H1 (cell line): ENCODE measurements at regions of chr17 and their contacts with region 1.

Region 1: GRCh38 chr17:10327640-10328039 is 45.2 kb downstream of the MYH13 start:
- DNase-seq: peak; percentile 73 to 97
- H3K4me3 ChIP-seq: no peak overlapping the region
- H3K27ac ChIP-seq: no peak overlapping the region
- H3K4me1 ChIP-seq: no peaks in the 10 kb centered on the region
- H3K27me3 ChIP-seq: no peaks in the 10 kb centered on the region
- CTCF ChIP-seq: peak; percentile 88 to 96 (median 96)
- EP300 ChIP-seq: no peak
- POLR2A ChIP-seq: no peak
- RAD21 ChIP-seq: peak; percentile 97 to 99

Region 2: GRCh38 chr17:10210151-10210930 is 117.3 kb before region 1 on chr17:
- CTCF ChIA-PET with region 1: no interaction called
- POLR2A ChIA-PET with region 1: no interaction called
- DNase-seq: peak; percentile 31 to 48
- H3K4me3 ChIP-seq: no peak overlapping the region
- H3K27ac ChIP-seq: no peak overlapping the region
- H3K4me1 ChIP-seq: peaks cover 5 to 16% (median 11%) of the 10 kb centered on the region in 4 experiments
- H3K27me3 ChIP-seq: no peaks in the 10 kb centered on the region
- CTCF ChIP-seq: no peak
- EP300 ChIP-seq: no peak
- POLR2A ChIP-seq: no peak
- RAD21 ChIP-seq: no peak

Region 3: GRCh38 chr17:10316801-10317542 is 10.7 kb before region 1 on chr17:
- CTCF ChIA-PET with region 1: interaction called, 28 read pairs
- POLR2A ChIA-PET with region 1: no interaction called
- DNase-seq: peak in 1 of 2 experiments; percentile 73
- H3K4me3 ChIP-seq: no peak overlapping the region
- H3K27ac ChIP-seq: no peak overlapping the region
- H3K4me1 ChIP-seq: no peaks in the 10 kb centered on the region; a peak in 1 of 7 replicates
- H3K27me3 ChIP-seq: no peaks in the 10 kb centered on the region
- CTCF ChIP-seq: peak; percentile 51 to 78 (median 74)
- EP300 ChIP-seq: no peak
- POLR2A ChIP-seq: no peak
- RAD21 ChIP-seq: peak; percentile 39 to 43

Region 4: GRCh38 chr17:10349403-10349802 is 21.8 kb after region 1 on chr17:
- CTCF ChIA-PET with region 1: interaction called, 176 read pairs
- POLR2A ChIA-PET with region 1: no interaction called
- DNase-seq: peak in 1 of 2 experiments; percentile 71
- H3K4me3 ChIP-seq: no peak overlapping the region
- H3K27ac ChIP-seq: no peak overlapping the region
- H3K4me1 ChIP-seq: no peaks in the 10 kb centered on the region
- H3K27me3 ChIP-seq: no peaks in the 10 kb centered on the region
- CTCF ChIP-seq: peak; percentile 52 to 75 (median 58)
- EP300 ChIP-seq: no peak
- POLR2A ChIP-seq: no peak
- RAD21 ChIP-seq: peak; percentile 51 to 63

Region 5: DNA sequence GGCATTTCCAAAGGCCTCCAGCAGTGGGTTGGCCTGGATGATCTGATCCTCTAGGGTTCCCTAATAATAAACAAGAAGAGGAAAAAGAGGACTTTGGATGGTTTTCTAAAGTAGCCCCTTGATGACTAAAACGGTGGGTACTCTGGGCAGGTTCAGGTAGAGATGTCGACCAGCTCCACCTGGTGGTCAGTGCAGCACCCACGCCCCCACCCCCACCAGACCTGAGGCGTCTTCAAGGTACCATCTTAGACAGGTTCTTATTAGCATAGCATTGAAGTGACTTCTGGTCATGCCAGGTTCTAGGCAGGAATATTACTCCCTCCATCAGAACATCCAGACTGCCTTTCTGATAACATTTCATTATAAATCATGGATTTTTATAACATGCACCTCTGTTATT is 30.1 kb after region 1 on chr17:
- CTCF ChIA-PET with region 1: interaction called, 176 read pairs
- POLR2A ChIA-PET with region 1: no interaction called
- DNase-seq: peak; percentile 19 to 80
- H3K4me3 ChIP-seq: no peak overlapping the region
- H3K27ac ChIP-seq: no peak overlapping the region
- H3K4me1 ChIP-seq: no peaks in the 10 kb centered on the region
- H3K27me3 ChIP-seq: no peaks in the 10 kb centered on the region
- CTCF ChIP-seq: peak; percentile 77 to 90 (median 83)
- EP300 ChIP-seq: no peak
- POLR2A ChIP-seq: no peak
- RAD21 ChIP-seq: peak; percentile 60 to 64

Region 6: DNA sequence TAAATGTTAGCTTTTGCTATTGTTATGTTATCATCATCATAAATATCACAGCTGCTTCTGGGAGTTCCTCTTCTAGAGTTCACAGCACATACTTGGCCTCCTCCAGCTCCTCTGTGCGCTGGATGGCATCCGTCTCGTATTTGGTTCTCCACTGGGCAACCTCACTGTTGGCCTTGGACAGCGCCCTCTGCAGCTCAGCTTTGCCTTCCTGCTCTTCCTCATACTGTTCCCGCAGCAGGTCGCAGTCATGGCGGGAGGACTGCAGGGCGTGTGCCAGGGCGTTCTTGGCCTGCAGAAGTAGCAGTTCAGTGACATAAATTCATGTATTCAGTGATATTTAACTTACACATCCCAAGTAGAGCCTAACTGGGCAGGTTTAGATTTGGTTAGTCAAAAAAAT is 70.7 kb after region 1 on chr17:
- CTCF ChIA-PET with region 1: interaction called, 18 read pairs
- POLR2A ChIA-PET with region 1: no interaction called
- DNase-seq: peak; percentile 9 to 67
- H3K4me3 ChIP-seq: no peak overlapping the region
- H3K27ac ChIP-seq: no peak overlapping the region
- H3K4me1 ChIP-seq: no peaks in the 10 kb centered on the region
- H3K27me3 ChIP-seq: no peaks in the 10 kb centered on the region
- CTCF ChIP-seq: peak; percentile 63 to 81 (median 75)
- EP300 ChIP-seq: no peak
- POLR2A ChIP-seq: no peak
- RAD21 ChIP-seq: peak; percentile 39 to 55; a peak in 3 of 4 replicates

Region 7: DNA sequence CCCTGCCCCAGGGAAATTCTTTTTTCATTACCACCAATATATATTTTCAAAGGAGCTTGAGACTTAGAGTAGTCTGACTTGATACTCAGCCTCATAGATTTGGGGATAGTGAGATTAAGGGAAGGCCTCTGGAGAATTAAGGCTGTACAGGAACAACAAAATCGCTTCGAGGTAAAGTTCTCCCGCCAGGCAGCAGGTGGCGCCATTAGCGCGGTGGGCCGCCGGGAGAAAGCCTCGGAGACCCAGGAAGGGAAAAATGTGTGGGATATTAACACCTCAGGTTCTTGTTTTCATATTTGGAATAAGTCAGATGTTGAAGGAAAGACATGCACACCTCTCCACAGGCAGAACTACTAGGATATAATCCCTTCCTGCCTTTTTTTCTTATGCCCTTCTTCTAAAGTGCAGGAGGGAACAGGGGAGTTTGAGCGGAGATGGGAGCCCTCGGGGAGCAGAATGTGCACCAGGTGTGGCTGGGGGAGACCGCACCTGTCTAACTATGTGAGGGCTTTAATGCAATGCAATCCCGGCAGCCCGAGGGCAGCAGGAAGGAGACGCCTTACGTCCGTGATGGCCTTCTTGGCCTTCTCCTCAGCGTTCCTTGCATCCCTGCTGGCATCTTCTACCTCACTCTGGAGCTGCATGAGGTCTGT is 303.5 kb after region 1 on chr17:
- CTCF ChIA-PET with region 1: interaction called, 56 read pairs
- POLR2A ChIA-PET with region 1: no interaction called
- DNase-seq: peak in 1 of 2 experiments; percentile 85
- H3K4me3 ChIP-seq: no peak overlapping the region
- H3K27ac ChIP-seq: no peak overlapping the region
- H3K4me1 ChIP-seq: no peaks in the 10 kb centered on the region
- H3K27me3 ChIP-seq: no peaks in the 10 kb centered on the region
- CTCF ChIP-seq: peak; percentile 75 to 79 (median 78)
- EP300 ChIP-seq: no peak
- POLR2A ChIP-seq: no peak
- RAD21 ChIP-seq: peak; percentile 65 to 70